ENCODE measurements at regions of chr15 and their contacts with region 1.

Region 1: GRCh38 chr15:99213187-99213811 is 36.1 kb downstream of the TTC23 start:
- DNase-seq: peak; percentile 80
- H3K4me3 ChIP-seq: no peak overlapping the region
- H3K27ac ChIP-seq: peak overlapping the region; percentile 50
- H3K4me1 ChIP-seq: peaks cover 23% of the 10 kb centered on the region
- H3K27me3 ChIP-seq: no peaks in the 10 kb centered on the region
- CTCF ChIP-seq: peak; percentile 95

Region 2: GRCh38 chr15:99102332-99103235 is 110.7 kb before region 1 on chr15:
- intact Hi-C with region 1: loop called (anchors 2 kb)
- DNase-seq: no peak
- H3K4me3 ChIP-seq: no peak overlapping the region
- H3K27ac ChIP-seq: no peak overlapping the region
- H3K4me1 ChIP-seq: peaks cover 30% of the 10 kb centered on the region
- H3K27me3 ChIP-seq: peaks cover 12% of the 10 kb centered on the region
- CTCF ChIP-seq: no peak

Region 3: DNA sequence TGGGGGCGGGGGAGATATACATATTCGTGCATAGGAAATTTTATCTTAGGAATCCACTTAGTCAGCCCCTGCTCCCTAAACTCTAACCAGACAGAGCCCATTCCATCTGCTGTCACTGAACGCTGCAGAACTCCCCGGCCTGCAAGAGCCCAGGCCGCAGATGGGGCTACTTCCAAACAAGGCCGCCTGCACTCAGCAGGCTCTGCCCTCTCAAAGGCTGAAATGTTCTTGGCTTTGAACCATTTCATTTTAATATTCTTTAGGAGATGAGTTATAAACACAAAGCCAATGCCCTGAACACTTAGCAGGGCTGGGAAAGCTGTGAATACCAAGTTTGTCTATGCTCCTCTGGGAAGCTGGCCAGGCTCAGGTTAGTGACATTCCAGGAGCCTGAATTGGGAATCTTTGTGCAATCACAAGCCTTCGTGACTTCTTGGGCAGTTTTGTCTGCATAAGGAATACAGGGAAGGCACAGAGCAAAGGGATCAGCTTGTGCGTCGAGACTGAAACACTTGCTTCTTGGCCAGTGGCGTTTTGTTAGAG is 43.5 kb before region 1 on chr15:
- intact Hi-C with region 1: loop called (anchors 5 kb)
- DNase-seq: no peak
- H3K4me3 ChIP-seq: no peak overlapping the region
- H3K27ac ChIP-seq: peak overlapping the region; percentile 91
- H3K4me1 ChIP-seq: peaks cover 54% of the 10 kb centered on the region
- H3K27me3 ChIP-seq: no peaks in the 10 kb centered on the region
- CTCF ChIP-seq: no peak

Measured in left ventricle myocardium inferior (tissue), 1 donor.